Heart left ventricle (tissue), 16 donors: ENCODE measurements at regions of chr9 and their contacts with region 1.

Region 1: GRCh38 chr9:6757456-6758247 is at the start of gene KDM4C:
- DNase-seq: peak; percentile 94 to 98 (median 96)
- ATAC-seq: peak; percentile 95 to 98 (median 96)
- H3K4me3 ChIP-seq: peak within 1 kb of the TSS; percentile 62 to 99 (median 90)
- H3K27ac ChIP-seq: peak within 1 kb of the TSS; percentile 90 to 99 (median 98)
- H3K4me1 ChIP-seq: peaks cover 0 to 16% (median 8%) of the 10 kb centered on the region in 12 donors
- H3K27me3 ChIP-seq: no peaks in the 10 kb centered on the region
- CTCF ChIP-seq: no peak
- POLR2A ChIP-seq: peak; percentile 22 to 87
- total RNA-seq, gene KDM4C: 8.8 to 19.9 (median 14.1) TPM

Region 2: DNA sequence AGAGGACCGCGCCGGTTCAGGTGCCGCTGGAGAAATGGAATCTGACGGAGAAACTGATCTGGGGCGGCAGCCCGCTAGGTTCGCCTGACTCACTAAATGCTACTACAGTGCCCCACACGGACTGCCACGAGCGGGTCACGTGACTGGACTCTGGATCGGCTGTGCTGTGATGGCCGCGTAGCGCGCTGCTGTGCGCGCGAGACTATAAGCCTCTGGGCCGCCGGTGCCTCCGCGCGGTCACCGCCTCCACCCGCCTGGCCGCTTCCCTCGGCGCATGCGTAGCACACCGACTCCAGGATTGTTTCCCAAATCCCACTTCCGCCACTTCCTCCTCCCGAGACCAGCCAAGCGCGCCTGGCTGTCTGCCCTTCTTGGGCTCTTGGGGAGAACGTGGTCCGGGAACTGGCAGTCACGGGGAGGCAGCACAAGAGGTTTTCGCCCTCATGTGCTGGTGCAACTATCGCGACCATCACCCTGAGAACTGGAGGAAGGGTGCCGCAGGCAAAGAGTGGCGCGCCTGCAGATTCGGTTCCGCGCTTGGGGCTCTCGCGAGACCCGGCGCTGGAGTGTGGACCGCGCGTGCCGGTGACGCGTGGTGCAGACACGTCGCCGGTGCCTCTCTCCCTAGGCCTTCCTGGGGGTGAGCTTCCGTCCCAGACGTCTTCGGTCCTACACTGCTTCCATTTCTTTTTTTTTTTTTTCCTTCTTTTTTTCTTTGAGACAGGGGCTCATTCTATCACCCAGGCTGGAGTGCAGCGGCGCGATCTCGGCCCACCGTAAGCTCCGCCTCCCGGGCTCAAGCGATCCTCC is 76.3 kb before region 1 on chr9:
- intact Hi-C with region 1: loop called in 4 of 10 experiments (anchors 1 to 5 kb)
- DNase-seq: peak; percentile 96 to 99 (median 98)
- ATAC-seq: peak; percentile 98 to 99 (median 99)
- H3K4me3 ChIP-seq: peak overlapping the region; percentile 41 to 81 (median 66)
- H3K27ac ChIP-seq: peak overlapping the region; percentile 77 to 100 (median 95)
- H3K4me1 ChIP-seq: peaks cover 0 to 29% (median 10%) of the 10 kb centered on the region in 12 donors
- H3K27me3 ChIP-seq: no peaks in the 10 kb centered on the region
- CTCF ChIP-seq: peak in 1 of 12 donors; percentile 6
- POLR2A ChIP-seq: peak in 1 of 2 donors; percentile 69

Region 3: GRCh38 chr9:6703898-6704639 is 53.6 kb before region 1 on chr9:
- intact Hi-C with region 1: loop called in 3 of 10 experiments (anchors 1 to 10 kb)
- DNase-seq: peak; percentile 78 to 95 (median 88)
- ATAC-seq: peak; percentile 85 to 98 (median 97)
- H3K4me3 ChIP-seq: peak overlapping the region; percentile 55 to 83 (median 63)
- H3K27ac ChIP-seq: peak overlapping the region; percentile 19 to 90 (median 70)
- H3K4me1 ChIP-seq: peaks cover 0 to 13% (median 5%) of the 10 kb centered on the region in 12 donors
- H3K27me3 ChIP-seq: no peaks in the 10 kb centered on the region
- CTCF ChIP-seq: no peak
- POLR2A ChIP-seq: peak in 1 of 2 donors; percentile 53

Region 4: DNA sequence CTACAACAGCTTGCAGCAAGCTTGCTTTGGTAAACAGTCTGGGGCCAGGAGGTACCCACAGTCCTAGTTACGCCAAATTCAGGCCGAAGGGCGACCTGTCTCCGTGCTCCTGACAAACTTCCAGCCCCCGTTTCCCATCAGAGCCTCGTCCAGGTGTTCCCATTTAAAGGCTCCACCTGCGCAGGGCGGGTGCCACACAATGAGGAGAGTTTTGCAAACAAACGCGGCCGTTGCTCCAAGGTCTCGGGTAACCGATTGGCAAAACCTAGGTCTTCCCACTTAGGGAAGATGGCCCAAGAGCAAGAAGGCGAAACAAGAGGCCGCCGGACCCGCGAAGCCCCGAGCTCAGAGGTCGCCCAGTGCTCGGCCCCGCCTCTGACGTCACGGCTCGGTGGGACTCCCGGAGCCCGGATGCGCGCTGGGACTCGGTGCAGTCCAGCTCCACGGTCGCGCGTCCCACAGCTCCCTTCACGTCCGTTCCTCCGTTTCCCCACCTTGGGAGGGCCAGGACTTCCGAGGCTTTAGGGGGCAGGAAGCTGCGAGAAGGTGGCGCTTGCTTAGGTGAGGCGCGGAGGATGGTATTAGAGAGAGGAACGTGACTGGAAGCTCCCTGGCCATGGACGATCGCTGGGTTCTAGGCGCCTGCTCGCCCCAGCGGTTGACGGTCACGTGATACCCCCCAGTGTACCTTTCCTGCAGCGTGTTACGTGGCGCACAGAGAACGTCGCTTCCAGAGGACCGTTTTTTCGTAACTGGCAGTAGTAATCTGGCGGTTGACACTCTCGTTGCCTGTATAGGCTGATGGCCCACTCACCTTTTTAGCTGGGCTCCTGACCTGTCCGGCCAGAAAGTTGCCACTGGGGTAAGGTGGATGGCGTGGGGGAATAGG is 41.7 kb before region 1 on chr9:
- intact Hi-C with region 1: no loop called
- DNase-seq: peak; percentile 15 to 84 (median 58)
- ATAC-seq: peak in 3 of 4 donors; percentile 86 to 87 (median 86)
- H3K4me3 ChIP-seq: peak overlapping the region; percentile 6 to 58 (median 46)
- H3K27ac ChIP-seq: no peak overlapping the region
- H3K4me1 ChIP-seq: peaks cover 0 to 7% (median 0%) of the 10 kb centered on the region in 12 donors
- H3K27me3 ChIP-seq: peaks cover 0 to 10% (median 0%) of the 10 kb centered on the region in 9 donors
- CTCF ChIP-seq: no peak
- POLR2A ChIP-seq: no peak

Region 5: GRCh38 chr9:6811436-6811835 is 53.8 kb after region 1 on chr9:
- intact Hi-C with region 1: no loop called
- DNase-seq: no peak
- ATAC-seq: no peak
- H3K4me3 ChIP-seq: no peak overlapping the region
- H3K27ac ChIP-seq: no peak overlapping the region
- H3K4me1 ChIP-seq: peaks cover 0 to 4% (median 0%) of the 10 kb centered on the region in 12 donors
- H3K27me3 ChIP-seq: no peaks in the 10 kb centered on the region
- CTCF ChIP-seq: no peak
- POLR2A ChIP-seq: no peak